Colonic mucosa (tissue), 4 donors: ENCODE measurements at regions of chr5 and their contacts with region 1.

Region 1: DNA sequence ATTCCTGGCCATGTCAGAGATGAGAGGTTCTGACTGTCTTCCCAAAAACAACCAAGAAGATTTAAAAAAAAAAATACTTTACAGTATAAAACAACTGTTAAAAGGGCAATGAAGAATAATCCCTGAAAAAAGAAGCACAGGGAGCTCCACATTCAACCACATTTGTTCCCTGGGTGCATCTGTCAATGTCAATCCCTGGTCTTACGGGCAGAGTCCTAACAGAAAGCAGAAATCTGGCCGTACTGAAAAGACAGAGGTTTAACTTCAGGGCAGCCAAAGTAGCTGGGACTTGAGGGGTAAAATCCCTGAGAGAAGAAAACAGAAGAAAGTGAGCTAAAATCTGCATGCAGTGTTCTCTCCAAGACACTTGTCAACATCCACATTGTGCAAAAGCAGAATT is 76.6 kb downstream of the RICTOR start:
- DNase-seq: no peak
- H3K4me3 ChIP-seq: no peak overlapping the region
- H3K27ac ChIP-seq: no peak overlapping the region
- H3K4me1 ChIP-seq: no peaks in the 10 kb centered on the region
- H3K27me3 ChIP-seq: no peaks in the 10 kb centered on the region
- CTCF ChIP-seq: no peak

Region 2: GRCh38 chr5:39080597-39081204 is 83.1 kb after region 1 on chr5:
- intact Hi-C with region 1: loop called (anchors 5 kb)
- DNase-seq: peak; percentile 41
- H3K4me3 ChIP-seq: no peak overlapping the region
- H3K27ac ChIP-seq: no peak overlapping the region
- H3K4me1 ChIP-seq: no peaks in the 10 kb centered on the region
- H3K27me3 ChIP-seq: no peaks in the 10 kb centered on the region
- CTCF ChIP-seq: peak; percentile 54